Endothelial cell of umbilical vein (primary cell): ENCODE measurements at regions of chr13 and their contacts with region 1.

Region 1: GRCh38 chr13:44879463-44880058 is 109.7 kb downstream of the NUFIP1 start:
- DNase-seq: peak; percentile 48
- H3K4me3 ChIP-seq: no peak overlapping the region
- H3K27ac ChIP-seq: no peak overlapping the region
- H3K4me1 ChIP-seq: peaks cover 12% of the 10 kb centered on the region
- H3K27me3 ChIP-seq: no peaks in the 10 kb centered on the region
- CTCF ChIP-seq: peak; percentile 47 to 52
- POLR2A ChIP-seq: no peak

Region 2: DNA sequence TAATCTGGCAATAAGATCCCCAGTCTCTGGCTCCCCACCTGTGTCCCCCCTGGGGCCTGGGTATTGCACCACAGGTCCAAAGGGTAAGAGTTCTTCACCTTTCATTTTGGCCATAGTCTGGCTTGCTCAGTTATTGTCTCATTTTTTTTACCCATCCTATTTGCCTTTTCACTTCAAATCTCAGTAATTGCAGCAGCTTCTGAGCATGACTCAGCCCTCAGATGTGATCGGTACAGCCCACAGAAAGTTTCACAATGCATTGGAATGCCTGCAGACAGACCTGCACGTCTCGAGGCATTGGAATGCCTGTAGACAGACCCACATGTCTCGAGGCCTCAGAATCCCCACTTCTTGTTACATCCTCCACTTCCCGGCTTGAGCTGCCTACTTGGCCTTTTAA is 63.9 kb before region 1 on chr13:
- CTCF ChIA-PET with region 1: interaction called, 4 read pairs
- POLR2A ChIA-PET with region 1: no interaction called
- dilution Hi-C with region 1: no loop called
- intact Hi-C with region 1: loop called (anchors 5 kb)
- DNase-seq: peak; percentile 54
- H3K4me3 ChIP-seq: no peak overlapping the region
- H3K27ac ChIP-seq: no peak overlapping the region
- H3K4me1 ChIP-seq: peaks cover 29% of the 10 kb centered on the region
- H3K27me3 ChIP-seq: no peaks in the 10 kb centered on the region
- CTCF ChIP-seq: no peak
- POLR2A ChIP-seq: no peak

Region 3: DNA sequence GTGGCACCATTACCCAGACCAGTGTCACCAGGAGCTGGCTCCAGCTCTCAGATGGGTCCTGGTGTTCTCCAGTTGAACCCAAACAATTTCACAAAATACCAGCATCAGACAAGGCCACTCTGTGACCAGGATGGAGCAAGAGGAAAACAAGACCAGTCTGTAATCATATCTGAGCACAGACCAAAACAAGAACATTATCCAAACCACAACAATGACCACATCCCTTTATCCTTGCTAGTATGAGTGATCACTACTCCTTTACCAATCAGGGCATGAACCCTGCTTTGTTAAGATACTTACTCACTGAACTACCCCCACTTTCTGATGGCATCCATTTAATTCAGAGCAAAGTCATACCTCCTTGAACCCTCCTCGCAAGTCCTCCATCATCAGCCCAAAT is 36.2 kb before region 1 on chr13:
- CTCF ChIA-PET with region 1: interaction called, 3 read pairs
- POLR2A ChIA-PET with region 1: no interaction called
- dilution Hi-C with region 1: no loop called
- intact Hi-C with region 1: loop called (anchors 5 kb)
- DNase-seq: no peak
- H3K4me3 ChIP-seq: no peak overlapping the region
- H3K27ac ChIP-seq: no peak overlapping the region
- H3K4me1 ChIP-seq: peaks cover 38% of the 10 kb centered on the region
- H3K27me3 ChIP-seq: no peaks in the 10 kb centered on the region
- CTCF ChIP-seq: no peak
- POLR2A ChIP-seq: no peak

Region 4: GRCh38 chr13:44917589-44918325 is 38.2 kb after region 1 on chr13:
- CTCF ChIA-PET with region 1: interaction called, 10 read pairs
- POLR2A ChIA-PET with region 1: no interaction called
- dilution Hi-C with region 1: no loop called
- intact Hi-C with region 1: loop called (anchors 1 kb)
- DNase-seq: peak; percentile 98
- H3K4me3 ChIP-seq: peak overlapping the region; percentile 4 to 66 (median 38)
- H3K27ac ChIP-seq: peak overlapping the region; percentile 95
- H3K4me1 ChIP-seq: peaks cover 29% of the 10 kb centered on the region
- H3K27me3 ChIP-seq: no peaks in the 10 kb centered on the region
- CTCF ChIP-seq: peak; percentile 38 to 42
- POLR2A ChIP-seq: no peak

Region 5: GRCh38 chr13:44930963-44931623 is 51.5 kb after region 1 on chr13:
- CTCF ChIA-PET with region 1: no interaction called
- POLR2A ChIA-PET with region 1: no interaction called
- dilution Hi-C with region 1: no loop called
- intact Hi-C with region 1: loop called (anchors 1 kb)
- DNase-seq: no peak
- H3K4me3 ChIP-seq: no peak overlapping the region
- H3K27ac ChIP-seq: peak overlapping the region; percentile 94
- H3K4me1 ChIP-seq: peaks cover 63% of the 10 kb centered on the region
- H3K27me3 ChIP-seq: no peaks in the 10 kb centered on the region
- CTCF ChIP-seq: no peak
- POLR2A ChIP-seq: no peak